Posterior cingulate gyrus (tissue), 11 donors: ENCODE measurements at regions of chr17 and their contacts with region 1.

Region 1: DNA sequence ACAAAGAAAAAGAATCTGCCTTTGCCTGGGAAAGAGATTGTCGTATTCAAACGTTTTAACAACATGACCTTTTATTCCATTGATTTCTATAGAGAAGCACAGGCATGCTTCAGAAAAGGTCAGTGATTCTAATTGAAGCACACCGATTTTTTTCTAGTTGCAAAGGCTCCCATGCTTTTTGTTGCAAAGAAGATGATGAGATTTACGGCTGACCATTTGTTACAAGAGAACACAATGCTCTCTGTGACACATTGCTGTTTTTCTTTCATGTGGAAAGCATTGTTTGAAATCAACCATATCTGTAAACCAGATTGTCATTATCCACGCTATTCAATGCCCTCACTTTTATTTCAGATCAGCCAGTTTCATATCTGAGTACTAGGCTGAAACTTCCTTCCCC is 99.8 kb downstream of the NLK start:
- DNase-seq: no peak

Region 2: DNA sequence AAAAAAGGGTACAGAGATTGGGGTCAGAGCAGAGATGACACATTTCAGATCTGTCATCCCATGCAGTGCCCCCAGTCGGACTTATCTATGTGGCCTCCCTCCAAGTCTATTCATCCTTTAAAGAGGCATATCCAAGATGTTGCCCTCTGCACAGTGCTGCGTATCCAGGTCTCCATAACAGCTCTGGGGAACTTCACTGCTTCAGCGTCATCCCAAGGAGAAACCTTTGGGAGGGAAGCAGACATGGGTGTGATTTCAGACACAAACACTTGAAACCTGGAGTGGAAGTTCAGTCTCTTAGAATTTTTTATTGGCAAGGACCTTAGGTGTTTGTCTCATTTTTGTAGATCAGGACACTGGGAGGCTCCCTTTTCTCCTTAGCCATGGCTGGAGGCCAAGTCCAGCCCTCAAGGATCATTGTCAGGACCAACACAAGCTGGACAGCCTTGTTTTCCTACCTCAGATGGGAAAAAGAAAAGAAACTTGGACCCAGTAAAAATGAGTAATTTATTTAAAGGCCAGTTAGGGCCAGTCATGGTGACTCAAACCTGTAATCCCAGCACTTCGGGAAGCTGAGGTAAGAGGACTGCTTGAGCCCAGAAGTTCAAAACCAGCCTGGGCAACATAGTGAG is 123.8 kb before region 1 on chr17:
- intact Hi-C with region 1: no loop called
- DNase-seq: no peak

Region 3: DNA sequence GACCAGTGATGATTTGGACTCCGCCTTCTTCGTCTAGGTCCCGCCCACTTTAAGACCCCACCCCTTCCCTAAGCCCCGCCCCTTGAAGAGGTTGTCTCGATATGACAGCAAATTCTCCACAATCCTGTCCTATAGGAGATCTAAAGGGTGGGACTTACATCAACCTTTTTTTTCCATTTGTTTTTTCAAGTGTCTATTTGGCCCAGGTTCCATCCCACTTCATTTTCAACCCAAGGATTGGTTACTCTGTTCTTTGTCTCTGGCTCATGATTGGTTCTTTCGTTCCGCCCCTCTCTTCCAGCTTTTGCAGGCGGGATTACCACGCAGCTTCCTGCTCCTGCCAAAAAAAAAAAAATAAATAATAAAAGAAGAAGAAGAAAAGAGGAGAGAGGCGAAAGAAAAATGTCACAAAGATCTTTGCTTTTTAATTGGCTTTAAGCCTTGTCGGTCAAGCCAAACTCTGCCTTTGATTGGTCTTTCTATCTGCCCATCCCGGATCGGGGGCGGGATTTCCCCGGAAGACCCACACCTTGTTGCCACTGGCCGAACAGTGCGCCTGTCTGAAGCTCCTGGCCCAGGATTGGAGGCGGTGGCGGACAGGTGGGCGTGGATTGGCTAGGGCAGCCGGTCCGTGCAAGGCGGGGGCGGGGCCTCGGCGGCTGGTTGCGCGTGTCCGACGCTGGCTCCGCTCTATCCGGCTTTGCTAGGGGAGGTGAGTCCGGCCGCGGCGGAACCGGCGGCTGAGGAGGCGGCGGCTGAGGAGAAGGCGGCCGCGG is 101.0 kb before region 1 on chr17:
- intact Hi-C with region 1: loop called (anchors 5 kb)
- DNase-seq: peak; percentile 99 to 100 (median 100)

Region 4: GRCh38 chr17:28180449-28180848 is 38.1 kb after region 1 on chr17:
- intact Hi-C with region 1: no loop called
- DNase-seq: no peak